Activated CD4-positive, alpha-beta memory T cell treated with anti-CD3 and anti-CD28 coated beads for 36 hours (primary cell): ENCODE measurements at regions of chr11 and their contacts with region 1.

Region 1: DNA sequence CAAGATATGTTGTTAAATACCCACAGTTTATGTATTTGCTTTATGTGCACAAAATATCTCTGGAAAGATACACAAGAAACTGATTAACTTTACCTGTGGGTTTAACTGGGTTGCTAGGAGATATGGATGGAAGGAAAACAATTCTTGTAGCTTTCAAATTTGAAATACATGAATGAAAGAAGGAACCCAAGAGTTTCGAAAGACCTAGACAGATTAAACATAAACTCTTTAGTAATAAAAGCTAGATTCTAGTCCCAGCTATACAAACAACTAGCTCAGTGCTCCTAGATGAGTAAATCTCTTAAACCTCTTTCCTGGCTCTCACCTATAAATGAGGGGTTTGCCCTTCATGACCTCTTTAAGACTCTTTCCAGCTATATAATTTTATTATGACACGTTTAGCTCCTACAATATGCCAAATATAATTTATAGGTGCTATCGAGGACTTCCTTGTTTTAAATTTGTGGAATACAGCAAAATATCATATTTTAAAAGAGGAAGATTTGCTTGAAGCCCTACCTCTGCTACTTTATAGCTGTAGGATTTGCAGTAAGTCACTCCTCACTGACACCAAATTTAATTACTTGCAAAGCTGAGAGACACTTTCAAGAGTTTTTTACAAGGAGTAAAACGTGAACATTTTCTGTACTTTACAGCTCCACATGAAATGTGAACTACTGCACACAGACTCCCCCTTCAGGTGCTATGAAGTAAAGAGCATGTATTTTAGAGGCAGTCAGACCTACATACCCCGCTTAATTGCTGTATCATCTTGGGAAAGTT is 50.7 kb downstream of the RRAS2 start:
- DNase-seq: no peak
- H3K4me3 Mint-ChIP-seq: no peak overlapping the region
- H3K27ac Mint-ChIP-seq: no peak overlapping the region
- H3K4me1 Mint-ChIP-seq: peaks cover 10% of the 10 kb centered on the region
- H3K27me3 Mint-ChIP-seq: no peaks in the 10 kb centered on the region

Region 2: DNA sequence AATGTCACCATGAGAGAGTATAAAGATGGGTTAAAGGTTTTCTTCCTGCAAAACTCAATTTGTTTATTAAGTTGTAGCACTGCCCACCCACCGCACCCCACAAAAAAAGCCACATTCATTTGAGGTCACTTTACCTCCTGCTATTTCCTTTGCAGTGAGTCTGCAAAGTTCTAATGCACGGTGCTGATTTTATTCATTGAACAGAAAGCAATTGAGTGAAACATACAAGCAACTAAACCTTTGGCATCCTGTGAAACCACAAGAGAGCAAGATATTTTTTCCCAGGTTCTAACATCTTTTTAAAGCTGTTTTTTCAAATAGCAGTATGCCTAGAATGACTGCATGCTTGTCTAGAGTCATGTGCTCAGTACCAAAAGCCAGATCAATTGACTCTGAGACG is 11.7 kb after region 1 on chr11:
- CTCF ChIA-PET with region 1: interaction called, 12 read pairs
- POLR2A ChIA-PET with region 1: no interaction called
- intact Hi-C with region 1: no loop called
- DNase-seq: peak; percentile 54
- H3K4me3 Mint-ChIP-seq: no peak overlapping the region
- H3K27ac Mint-ChIP-seq: peak overlapping the region; percentile 52
- H3K4me1 Mint-ChIP-seq: peaks cover 30% of the 10 kb centered on the region
- H3K27me3 Mint-ChIP-seq: no peaks in the 10 kb centered on the region

Region 3: GRCh38 chr11:14418803-14419417 is 110.6 kb after region 1 on chr11:
- CTCF ChIA-PET with region 1: interaction called, 11 read pairs
- POLR2A ChIA-PET with region 1: no interaction called
- intact Hi-C with region 1: loop called (anchors 2 kb)
- DNase-seq: no peak
- H3K4me3 Mint-ChIP-seq: no peak overlapping the region
- H3K27ac Mint-ChIP-seq: no peak overlapping the region
- H3K4me1 Mint-ChIP-seq: peaks cover 24% of the 10 kb centered on the region
- H3K27me3 Mint-ChIP-seq: no peaks in the 10 kb centered on the region